T-cell (primary cell): ENCODE measurements at regions of chr1 and their contacts with region 1.

Region 1: DNA sequence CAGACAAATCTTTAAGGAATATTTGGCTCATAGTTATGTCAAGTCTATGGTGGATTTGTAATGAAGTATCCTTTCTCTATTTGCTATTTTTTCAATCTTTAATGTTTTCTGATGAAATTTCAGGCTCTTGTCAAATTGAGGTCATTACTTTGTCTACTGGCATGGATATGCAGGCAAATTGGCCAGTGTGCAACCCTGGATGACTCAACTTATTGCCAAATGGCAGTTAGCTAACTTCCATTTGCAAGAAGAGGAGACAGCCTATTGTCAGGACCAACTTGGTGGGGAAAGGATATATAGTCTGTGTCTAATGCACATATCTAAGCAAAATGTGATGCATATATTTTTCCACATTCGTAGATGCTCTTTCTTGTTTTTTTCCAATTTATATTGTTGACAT is 530.5 kb downstream of the PTBP2 start:
- DNase-seq: no peak
- ATAC-seq: no peak
- H3K4me3 ChIP-seq: no peak overlapping the region
- H3K4me3 Mint-ChIP-seq: no peak overlapping the region
- H3K27ac ChIP-seq: no peak overlapping the region
- H3K27ac Mint-ChIP-seq: no peak overlapping the region
- H3K4me1 ChIP-seq: no peaks in the 10 kb centered on the region
- H3K4me1 Mint-ChIP-seq: no peaks in the 10 kb centered on the region
- H3K27me3 ChIP-seq: no peaks in the 10 kb centered on the region
- H3K27me3 Mint-ChIP-seq: no peaks in the 10 kb centered on the region

Region 2: DNA sequence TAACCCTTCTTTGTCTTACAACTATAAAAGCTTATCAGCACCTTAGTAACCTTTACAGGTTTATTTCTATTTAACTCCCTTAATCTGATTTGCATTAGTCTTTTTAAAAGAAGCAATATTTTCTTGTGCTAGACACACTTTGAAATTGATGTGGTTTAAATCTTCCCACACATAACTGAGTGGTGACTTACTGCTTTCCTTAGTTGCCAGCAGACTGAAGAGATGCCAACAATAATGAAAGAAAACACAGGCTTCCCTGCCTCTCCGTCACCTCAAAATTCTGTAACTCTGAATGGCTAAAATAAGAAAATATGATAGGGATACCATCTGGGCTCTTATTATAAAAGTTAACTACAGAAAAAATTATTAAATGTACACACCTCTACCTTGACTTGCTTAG is 333.7 kb before region 1 on chr1:
- CTCF ChIA-PET with region 1: no interaction called
- POLR2A ChIA-PET with region 1: no interaction called
- DNase-seq: no peak
- ATAC-seq: no peak
- H3K4me3 ChIP-seq: no peak overlapping the region
- H3K4me3 Mint-ChIP-seq: no peak overlapping the region
- H3K27ac ChIP-seq: no peak overlapping the region
- H3K27ac Mint-ChIP-seq: no peak overlapping the region
- H3K4me1 ChIP-seq: no peaks in the 10 kb centered on the region
- H3K4me1 Mint-ChIP-seq: no peaks in the 10 kb centered on the region
- H3K27me3 ChIP-seq: no peaks in the 10 kb centered on the region
- H3K27me3 Mint-ChIP-seq: peaks cover 1 to 3% of the 10 kb centered on the region in 2 donors

Region 3: DNA sequence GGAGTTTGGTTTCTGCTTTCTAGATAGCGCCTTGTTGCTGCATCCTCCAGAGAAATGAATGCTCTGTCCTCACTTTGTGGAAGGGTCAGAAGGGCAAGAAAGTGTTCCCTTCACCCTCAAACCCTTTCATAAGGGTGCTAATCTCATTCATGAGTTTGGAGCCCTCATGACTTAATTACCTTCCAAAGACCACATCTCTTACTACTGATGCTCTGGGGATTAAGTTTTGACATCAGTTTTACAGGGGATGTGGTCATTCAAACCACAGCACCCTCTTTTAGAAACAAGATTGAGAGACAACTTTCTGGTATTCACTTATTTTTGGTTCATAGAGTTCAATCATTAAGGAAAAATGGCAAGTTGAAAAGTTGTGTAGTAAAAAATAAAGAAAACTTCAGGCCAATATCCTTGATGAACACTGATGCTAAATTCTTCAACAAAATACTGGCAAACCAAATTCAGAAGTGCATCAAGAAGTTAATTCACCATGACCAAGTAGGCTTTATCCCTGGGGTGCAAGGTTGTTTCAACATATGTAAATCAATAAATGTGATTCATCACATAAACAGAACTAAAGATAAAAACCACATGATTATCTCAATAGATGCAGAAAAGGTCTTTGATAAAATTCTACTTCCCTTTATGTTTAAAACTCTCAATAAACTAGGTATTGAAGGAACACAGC is 88.3 kb before region 1 on chr1:
- CTCF ChIA-PET with region 1: no interaction called
- POLR2A ChIA-PET with region 1: no interaction called
- DNase-seq: no peak
- ATAC-seq: no peak
- H3K4me3 ChIP-seq: no peak overlapping the region
- H3K4me3 Mint-ChIP-seq: no peak overlapping the region
- H3K27ac ChIP-seq: no peak overlapping the region
- H3K27ac Mint-ChIP-seq: no peak overlapping the region
- H3K4me1 ChIP-seq: no peaks in the 10 kb centered on the region
- H3K4me1 Mint-ChIP-seq: peaks cover 0 to 5% (median 0%) of the 10 kb centered on the region in 3 donors
- H3K27me3 ChIP-seq: no peaks in the 10 kb centered on the region
- H3K27me3 Mint-ChIP-seq: no peaks in the 10 kb centered on the region

Region 4: DNA sequence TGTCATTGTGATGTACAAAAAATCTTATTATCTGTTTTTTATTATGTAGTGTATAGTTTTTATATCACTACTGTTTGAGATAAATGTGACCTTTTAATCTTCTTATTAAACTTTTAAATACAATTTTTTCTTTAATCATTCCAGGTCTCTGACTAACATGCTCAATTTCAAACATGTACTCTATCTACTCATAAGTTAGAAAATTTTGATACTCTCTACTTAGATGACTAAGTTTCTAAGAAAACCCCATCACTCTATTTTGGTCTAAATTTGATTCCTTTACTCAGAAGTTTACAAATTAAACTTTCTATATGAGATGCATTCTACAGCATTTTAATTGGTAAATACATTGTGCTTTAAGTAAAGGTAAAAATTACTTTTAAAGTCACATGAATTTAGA is 13.6 kb after region 1 on chr1:
- CTCF ChIA-PET with region 1: interaction called in 1 of 2 experiments, 11 read pairs
- POLR2A ChIA-PET with region 1: no interaction called
- DNase-seq: no peak
- ATAC-seq: no peak
- H3K4me3 ChIP-seq: no peak overlapping the region
- H3K4me3 Mint-ChIP-seq: no peak overlapping the region
- H3K27ac ChIP-seq: no peak overlapping the region
- H3K27ac Mint-ChIP-seq: no peak overlapping the region
- H3K4me1 ChIP-seq: no peaks in the 10 kb centered on the region
- H3K4me1 Mint-ChIP-seq: no peaks in the 10 kb centered on the region
- H3K27me3 ChIP-seq: no peaks in the 10 kb centered on the region
- H3K27me3 Mint-ChIP-seq: no peaks in the 10 kb centered on the region